ENCODE measurements at regions of chr22 and their contacts with region 1.

Region 1: GRCh38 chr22:31749636-31750364 is at the start of gene PRR14L:
- DNase-seq: peak; percentile 98 to 99 (median 99)
- ATAC-seq: peak; percentile 89 to 95 (median 94)
- H3K4me3 ChIP-seq: peak within 1 kb of the TSS; percentile 62 to 100 (median 86)
- H3K27ac ChIP-seq: peak within 1 kb of the TSS; percentile 73 to 95 (median 89)
- H3K4me1 ChIP-seq: peaks cover 3 to 54% (median 44%) of the 10 kb centered on the region in 12 donors
- H3K27me3 ChIP-seq: no peaks in the 10 kb centered on the region
- CTCF ChIP-seq: peak in 4 of 12 donors; percentile 12 to 24 (median 18)
- POLR2A ChIP-seq: peak in 1 of 2 donors; percentile 84
- total RNA-seq, gene PRR14L: 6.6 to 29.1 (median 15.1) TPM

Region 2: GRCh38 chr22:31661851-31662656 is 87.7 kb before region 1 on chr22 and contains the start of gene PISD:
- intact Hi-C with region 1: loop called in 5 of 10 experiments (anchors 5 to 10 kb)
- DNase-seq: peak; percentile 94 to 97 (median 96)
- ATAC-seq: peak; percentile 98 to 100 (median 100)
- H3K4me3 ChIP-seq: peak within 1 kb of the TSS; percentile 33 to 100 (median 86)
- H3K27ac ChIP-seq: peak within 1 kb of the TSS in 10 of 12 donors; percentile 34 to 81 (median 54)
- H3K4me1 ChIP-seq: peaks cover 0 to 21% (median 13%) of the 10 kb centered on the region in 12 donors
- H3K27me3 ChIP-seq: no peaks in the 10 kb centered on the region
- CTCF ChIP-seq: no peak
- POLR2A ChIP-seq: peak in 1 of 2 donors; percentile 58
- total RNA-seq, gene PISD: 13.1 to 38.1 (median 17.0) TPM

Region 3: DNA sequence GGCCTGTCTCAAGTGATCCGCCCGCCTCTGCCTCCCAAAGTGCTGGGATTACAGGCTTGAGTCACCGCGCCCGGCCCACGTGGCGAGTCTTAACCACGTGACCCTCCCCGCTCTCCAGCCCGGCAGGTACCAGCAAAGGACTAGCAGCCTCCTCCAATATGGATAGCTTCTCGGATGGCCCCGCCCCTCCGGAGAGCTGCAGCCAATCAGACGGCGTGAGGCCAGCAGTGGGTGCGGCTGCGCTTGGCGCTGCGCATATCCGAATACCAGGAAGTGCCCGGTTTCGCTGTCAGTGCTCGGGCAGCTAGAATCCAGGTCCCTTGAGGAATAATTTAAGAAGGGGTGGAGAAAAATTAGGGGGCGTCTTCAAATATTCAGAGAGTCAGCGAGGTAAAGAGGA is 73.1 kb before region 1 on chr22:
- intact Hi-C with region 1: loop called in 2 of 10 experiments (anchors 5 kb)
- DNase-seq: peak; percentile 92 to 97 (median 94)
- ATAC-seq: peak; percentile 98 to 100 (median 100)
- H3K4me3 ChIP-seq: peak overlapping the region; percentile 6 to 78 (median 56)
- H3K27ac ChIP-seq: peak overlapping the region in 10 of 12 donors; percentile 7 to 66 (median 56)
- H3K4me1 ChIP-seq: peaks cover 0 to 25% (median 5%) of the 10 kb centered on the region in 12 donors
- H3K27me3 ChIP-seq: no peaks in the 10 kb centered on the region
- CTCF ChIP-seq: no peak
- POLR2A ChIP-seq: peak in 1 of 2 donors; percentile 37